Right ventricle myocardium inferior (tissue), 1 donor: ENCODE measurements at regions of chr1 and their contacts with region 1.

Region 1: GRCh38 chr1:184805667-184806295 is 51.1 kb upstream of the EDEM3 start:
- DNase-seq: peak; percentile 91
- ATAC-seq: peak; percentile 96

Region 2: DNA sequence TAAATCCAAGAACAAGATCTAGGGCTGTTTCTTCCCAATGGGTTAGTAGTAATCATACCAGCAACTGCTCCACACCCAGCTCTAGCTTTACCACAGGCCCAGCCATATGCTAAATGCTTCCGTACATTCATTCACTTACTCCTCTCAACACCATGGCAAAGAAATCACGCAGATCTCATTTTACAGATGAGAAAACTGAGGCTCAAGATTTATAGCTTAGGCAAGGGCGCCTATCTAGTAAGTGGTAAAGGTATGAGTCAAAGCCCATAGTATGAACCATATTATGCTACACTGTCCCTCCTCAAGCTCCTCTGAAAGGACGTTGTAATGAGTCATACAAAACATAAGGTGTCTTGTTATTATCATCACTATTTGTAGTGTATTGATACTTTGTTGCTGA is 86.3 kb after region 1 on chr1:
- intact Hi-C with region 1: loop called (anchors 5 kb)
- DNase-seq: no peak
- ATAC-seq: no peak

Region 3: GRCh38 chr1:184982002-184982954 is 176.5 kb after region 1 on chr1:
- intact Hi-C with region 1: loop called (anchors 1 kb)
- DNase-seq: peak; percentile 91
- ATAC-seq: peak; percentile 98

Region 4: GRCh38 chr1:184994301-184994700 is 188.5 kb after region 1 on chr1:
- intact Hi-C with region 1: no loop called
- DNase-seq: no peak
- ATAC-seq: no peak